OCI-LY7 (cell line): ENCODE measurements at regions of chr15 and their contacts with region 1.

Region 1: GRCh38 chr15:48112242-48112641 is 8.5 kb upstream of the SLC24A5 start:
- DNase-seq: peak; percentile 11
- H3K4me3 ChIP-seq: no peak overlapping the region
- H3K27ac ChIP-seq: no peak overlapping the region
- H3K4me1 ChIP-seq: no peaks in the 10 kb centered on the region
- CTCF ChIP-seq: peak; percentile 56

Region 2: DNA sequence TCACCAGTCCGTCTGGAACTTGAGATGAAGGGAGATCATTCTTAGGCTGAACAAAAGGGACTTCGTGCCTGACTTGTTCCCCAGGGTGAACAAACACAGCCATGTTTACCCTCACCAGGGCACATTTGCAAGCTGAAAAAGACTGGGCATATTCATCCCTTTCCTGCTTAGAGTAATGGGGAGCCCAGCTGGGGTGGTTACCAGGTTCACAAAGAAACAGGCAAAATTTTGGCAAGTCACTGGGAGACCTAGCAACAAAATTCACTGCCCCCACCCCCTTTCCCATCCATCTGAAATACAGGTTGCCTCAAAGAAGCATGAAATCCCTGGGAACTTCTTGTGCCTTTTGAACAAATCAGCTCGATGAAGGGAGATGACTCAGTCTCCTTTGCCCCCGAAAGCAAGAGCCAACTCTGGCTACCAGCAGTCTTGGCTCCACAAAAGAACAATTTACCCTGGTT is 1702.4 kb before region 1 on chr15:
- CTCF ChIA-PET with region 1: no interaction called
- POLR2A ChIA-PET with region 1: interaction called, 10 read pairs
- intact Hi-C with region 1: no loop called
- DNase-seq: no peak
- H3K4me3 ChIP-seq: no peak overlapping the region
- H3K27ac ChIP-seq: no peak overlapping the region
- H3K4me1 ChIP-seq: no peaks in the 10 kb centered on the region
- CTCF ChIP-seq: no peak

Region 3: GRCh38 chr15:48250640-48251076 is 138.4 kb after region 1 on chr15:
- CTCF ChIA-PET with region 1: no interaction called
- POLR2A ChIA-PET with region 1: no interaction called
- intact Hi-C with region 1: loop called (anchors 10 kb)
- DNase-seq: peak; percentile 66
- H3K4me3 ChIP-seq: no peak overlapping the region
- H3K27ac ChIP-seq: no peak overlapping the region
- H3K4me1 ChIP-seq: no peaks in the 10 kb centered on the region
- CTCF ChIP-seq: peak; percentile 82